Posterior cingulate gyrus (tissue), 11 donors: ENCODE measurements at regions of chr5 and their contacts with region 1.

Region 1: DNA sequence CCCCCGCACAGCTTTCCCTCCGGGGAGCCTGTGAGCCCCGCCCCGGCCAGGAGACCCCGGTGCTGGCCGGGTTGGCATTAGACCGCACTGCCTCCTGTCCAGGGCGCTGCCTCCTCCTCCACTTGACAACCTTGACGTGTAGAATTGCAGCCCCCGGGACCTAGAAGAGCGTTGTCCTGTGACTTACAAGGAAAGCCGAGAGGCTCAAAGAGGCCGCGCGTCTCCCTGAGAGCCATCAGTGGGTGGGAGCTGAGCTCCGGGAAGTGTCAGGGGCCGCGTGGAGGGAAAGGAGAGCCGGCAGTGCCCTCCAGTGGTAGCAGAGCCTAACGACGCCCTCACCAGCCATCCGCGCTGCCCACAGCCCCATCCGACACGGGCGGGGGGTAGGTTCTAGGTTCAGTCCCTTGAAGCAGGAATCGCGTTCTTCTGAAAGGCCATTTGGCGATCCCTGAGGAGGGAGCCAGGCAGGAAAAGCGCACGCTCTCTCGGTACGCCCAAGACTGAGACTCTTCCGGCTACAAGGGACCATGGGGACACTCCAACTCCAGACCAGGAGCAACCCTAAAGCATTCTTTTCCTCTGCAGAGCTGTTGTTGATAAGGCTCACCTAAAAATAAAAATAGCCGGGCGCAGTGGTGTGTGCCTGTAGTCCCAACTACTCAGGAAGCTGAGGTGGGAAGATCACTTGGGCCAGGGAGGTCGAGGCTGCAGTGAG is 40.6 kb upstream of the SAP30L start:
- DNase-seq: peak; percentile 70 to 97 (median 84)

Region 2: GRCh38 chr5:153974131-153974812 is 431.0 kb before region 1 on chr5:
- intact Hi-C with region 1: loop called (anchors 1 kb)
- DNase-seq: peak in 3 of 10 donors; percentile 24 to 72 (median 26)

Region 3: GRCh38 chr5:154072414-154073171 is 332.6 kb before region 1 on chr5:
- intact Hi-C with region 1: loop called (anchors 1 kb)
- DNase-seq: peak; percentile 64 to 97 (median 88)

Region 4: GRCh38 chr5:154189819-154190594 is 215.2 kb before region 1 on chr5:
- intact Hi-C with region 1: loop called (anchors 5 kb)
- DNase-seq: peak; percentile 74 to 97 (median 80)